ENCODE measurements at regions of chr1 and their contacts with region 1.

Region 1: GRCh38 chr1:160607011-160607671 is 27.8 kb upstream of the CD84 start:
- DNase-seq: peak; percentile 77
- ATAC-seq: peak; percentile 96
- H3K4me3 ChIP-seq: no peak overlapping the region
- H3K27ac ChIP-seq: no peak overlapping the region
- H3K4me1 ChIP-seq: no peaks in the 10 kb centered on the region
- H3K27me3 ChIP-seq: no peaks in the 10 kb centered on the region; the same call in 1 of the 2 replicates
- CTCF ChIP-seq: peak; percentile 72
- POLR2A ChIP-seq: no peak
- RAD21 ChIP-seq: peak; percentile 80

Region 2: GRCh38 chr1:160428655-160429054 is 178.5 kb before region 1 on chr1:
- CTCF ChIA-PET with region 1: no interaction called
- POLR2A ChIA-PET with region 1: no interaction called
- dilution Hi-C with region 1: no loop called
- in situ Hi-C with region 1: loop called (anchors 5 kb)
- intact Hi-C with region 1: loop called (anchors 1 kb)
- DNase-seq: peak; percentile 47
- ATAC-seq: peak; percentile 88
- H3K4me3 ChIP-seq: no peak overlapping the region
- H3K27ac ChIP-seq: no peak overlapping the region
- H3K4me1 ChIP-seq: no peaks in the 10 kb centered on the region
- H3K27me3 ChIP-seq: no peaks in the 10 kb centered on the region
- CTCF ChIP-seq: peak; percentile 64
- POLR2A ChIP-seq: no peak
- RAD21 ChIP-seq: peak; percentile 67

Region 3: GRCh38 chr1:160539990-160540858 is 66.9 kb before region 1 on chr1:
- CTCF ChIA-PET with region 1: no interaction called
- POLR2A ChIA-PET with region 1: no interaction called
- dilution Hi-C with region 1: no loop called
- in situ Hi-C with region 1: no loop called
- intact Hi-C with region 1: loop called (anchors 2 kb)
- DNase-seq: no peak
- ATAC-seq: no peak
- H3K4me3 ChIP-seq: no peak overlapping the region
- H3K27ac ChIP-seq: no peak overlapping the region
- H3K4me1 ChIP-seq: no peaks in the 10 kb centered on the region
- H3K27me3 ChIP-seq: no peaks in the 10 kb centered on the region
- CTCF ChIP-seq: no peak
- POLR2A ChIP-seq: no peak
- RAD21 ChIP-seq: no peak

Measured in IMR-90 (cell line).